Heart right ventricle (tissue), 16 donors: ENCODE measurements at regions of chr11 and their contacts with region 1.

Region 1: DNA sequence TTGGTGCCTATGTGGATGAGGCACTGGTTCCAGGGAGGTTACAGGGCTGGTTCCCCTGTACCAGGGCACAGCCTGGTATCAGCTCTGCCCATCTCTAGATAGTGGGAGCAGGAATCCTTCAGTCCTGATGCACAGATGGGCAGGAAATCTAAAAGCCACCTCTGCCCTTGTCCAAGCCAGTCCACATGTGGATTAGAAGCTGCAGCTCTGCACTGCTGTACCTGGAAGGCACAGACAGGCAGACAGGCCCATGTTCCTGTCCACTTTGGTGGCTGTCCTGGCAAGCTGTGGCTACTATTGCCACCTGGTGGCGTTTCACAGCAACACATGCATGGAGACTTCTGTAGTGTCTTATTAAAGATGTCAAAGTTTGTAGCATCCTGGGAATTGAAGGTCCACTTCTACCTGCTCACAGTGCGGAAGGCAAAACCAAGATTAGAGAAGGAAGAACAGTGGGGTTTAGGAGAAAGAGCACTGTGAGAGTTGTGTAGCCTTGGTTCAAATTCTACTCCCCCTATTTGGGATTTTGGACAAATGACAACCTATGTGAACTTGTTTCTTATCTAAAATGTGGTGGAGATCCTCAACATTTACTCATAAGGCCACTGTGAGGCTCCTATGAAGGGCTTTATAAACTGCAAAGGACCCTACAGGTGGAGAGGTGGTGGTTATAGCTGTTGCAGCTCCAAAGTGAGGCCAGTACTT is 30.1 kb downstream of the NAV2 start:
- DNase-seq: peak; percentile 72 to 80
- ATAC-seq: peak; percentile 78 to 90 (median 86)
- H3K4me3 ChIP-seq: no peak overlapping the region
- H3K27ac ChIP-seq: peak overlapping the region in 1 of 10 donors; percentile 13
- H3K4me1 ChIP-seq: peaks cover 0 to 51% (median 27%) of the 10 kb centered on the region in 9 donors
- H3K27me3 ChIP-seq: no peaks in the 10 kb centered on the region
- CTCF ChIP-seq: peak; percentile 80 to 94 (median 91)

Region 2: GRCh38 chr11:19311308-19312030 is 431.3 kb before region 1 on chr11:
- intact Hi-C with region 1: loop called in 3 of 10 experiments (anchors 10 kb)
- DNase-seq: peak; percentile 53 to 71
- ATAC-seq: peak; percentile 83 to 91 (median 86)
- H3K4me3 ChIP-seq: no peak overlapping the region
- H3K27ac ChIP-seq: no peak overlapping the region
- H3K4me1 ChIP-seq: peaks cover 0 to 5% (median 0%) of the 10 kb centered on the region in 9 donors
- H3K27me3 ChIP-seq: peaks cover 0 to 8% (median 0%) of the 10 kb centered on the region in 7 donors
- CTCF ChIP-seq: peak; percentile 60 to 89 (median 83)

Region 3: DNA sequence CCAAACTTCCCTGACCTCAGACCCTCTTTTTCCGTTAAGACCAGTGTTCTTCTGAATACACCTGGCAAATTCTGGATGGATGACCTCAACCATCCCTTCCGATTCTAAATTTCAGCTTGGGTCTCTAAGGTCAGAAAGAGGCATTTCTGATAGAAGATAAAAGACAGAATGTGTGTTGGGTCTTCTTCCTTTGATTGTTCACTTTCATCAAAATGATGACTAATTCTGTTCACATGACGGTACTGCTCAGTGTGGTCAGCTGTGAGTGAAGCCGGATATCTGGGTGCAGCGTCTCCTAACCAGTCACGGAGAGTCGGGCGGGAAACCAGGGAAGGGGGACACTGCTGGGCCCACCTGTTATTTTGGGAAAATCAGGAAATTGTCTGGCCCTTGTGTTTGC is 181.7 kb before region 1 on chr11:
- intact Hi-C with region 1: loop called (anchors 1 to 5 kb)
- DNase-seq: no peak
- ATAC-seq: no peak
- H3K4me3 ChIP-seq: no peak overlapping the region
- H3K27ac ChIP-seq: no peak overlapping the region
- H3K4me1 ChIP-seq: peaks cover 0 to 26% (median 7%) of the 10 kb centered on the region in 9 donors
- H3K27me3 ChIP-seq: no peaks in the 10 kb centered on the region
- CTCF ChIP-seq: no peak

Region 4: GRCh38 chr11:19777377-19778102 is 34.8 kb after region 1 on chr11:
- intact Hi-C with region 1: no loop called
- DNase-seq: no peak
- ATAC-seq: peak in 7 of 8 donors; percentile 25 to 73 (median 40)
- H3K4me3 ChIP-seq: peak overlapping the region; percentile 20 to 58 (median 47)
- H3K27ac ChIP-seq: peak overlapping the region in 2 of 10 donors; percentile 15 to 53
- H3K4me1 ChIP-seq: peaks cover 0 to 38% (median 9%) of the 10 kb centered on the region in 9 donors
- H3K27me3 ChIP-seq: peaks cover 0 to 39% (median 0%) of the 10 kb centered on the region in 7 donors
- CTCF ChIP-seq: no peak

Region 5: DNA sequence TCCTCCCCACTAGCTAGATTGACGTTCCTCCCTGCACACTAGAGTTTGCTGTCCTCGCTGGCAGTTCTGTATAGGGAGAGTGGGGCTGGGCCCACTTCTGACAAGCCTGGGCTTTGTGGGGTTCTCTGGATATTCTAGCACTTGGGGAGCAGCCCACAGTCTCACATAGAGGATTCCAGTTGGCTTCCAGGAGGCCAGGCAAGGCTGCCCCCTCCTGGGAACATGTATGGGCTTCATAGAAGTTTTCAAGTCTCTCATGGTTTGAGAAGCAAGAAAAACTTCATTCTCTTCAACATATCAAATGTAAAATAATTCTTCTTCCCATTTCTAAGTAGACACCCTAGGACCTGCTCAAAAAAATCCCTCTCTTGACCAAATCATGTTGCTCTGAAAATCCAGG is 57.4 kb after region 1 on chr11:
- intact Hi-C with region 1: loop called in 1 of 10 experiments (anchors 10 kb)
- DNase-seq: no peak
- ATAC-seq: peak in 6 of 8 donors; percentile 23 to 60 (median 42)
- H3K4me3 ChIP-seq: no peak overlapping the region
- H3K27ac ChIP-seq: no peak overlapping the region
- H3K4me1 ChIP-seq: peaks cover 0 to 78% (median 31%) of the 10 kb centered on the region in 9 donors
- H3K27me3 ChIP-seq: no peaks in the 10 kb centered on the region
- CTCF ChIP-seq: peak in 7 of 9 donors; percentile 15 to 46 (median 36)